Sigmoid colon (tissue), 7 donors: ENCODE measurements at regions of chr1 and their contacts with region 1.

Region 1: GRCh38 chr1:34865981-34866761 is 6.6 kb upstream of the SMIM12 start:
- DNase-seq: peak; percentile 91
- H3K4me3 ChIP-seq: peak overlapping the region; percentile 67 to 81 (median 78)
- H3K27ac ChIP-seq: peak overlapping the region; percentile 78 to 86 (median 83)
- H3K4me1 ChIP-seq: peaks cover 0 to 19% (median 12%) of the 10 kb centered on the region in 4 donors
- H3K27me3 ChIP-seq: no peaks in the 10 kb centered on the region
- CTCF ChIP-seq: peak; percentile 79 to 97 (median 94)
- EP300 ChIP-seq: no peak
- POLR2A ChIP-seq: no peak

Region 2: GRCh38 chr1:34786521-34787325 is 79.4 kb before region 1 on chr1:
- intact Hi-C with region 1: loop called (anchors 5 kb)
- DNase-seq: peak; percentile 68
- H3K4me3 ChIP-seq: no peak overlapping the region
- H3K27ac ChIP-seq: no peak overlapping the region
- H3K4me1 ChIP-seq: peaks cover 0 to 2% (median 2%) of the 10 kb centered on the region in 4 donors
- H3K27me3 ChIP-seq: peaks cover 16 to 26% (median 17%) of the 10 kb centered on the region in 3 donors
- CTCF ChIP-seq: peak in 3 of 4 experiments; percentile 54 to 78 (median 62)
- EP300 ChIP-seq: no peak
- POLR2A ChIP-seq: no peak

Region 3: GRCh38 chr1:34984793-34985608 is 118.8 kb after region 1 on chr1 and contains the start of gene TMEM35B:
- intact Hi-C with region 1: loop called (anchors 5 kb)
- DNase-seq: peak; percentile 80
- H3K4me3 ChIP-seq: peak within 1 kb of the TSS; percentile 65 to 90 (median 72)
- H3K27ac ChIP-seq: peak within 1 kb of the TSS; percentile 92 to 94 (median 92)
- H3K4me1 ChIP-seq: peaks cover 0 to 28% (median 19%) of the 10 kb centered on the region in 4 donors
- H3K27me3 ChIP-seq: no peaks in the 10 kb centered on the region
- CTCF ChIP-seq: no peak
- EP300 ChIP-seq: no peak
- POLR2A ChIP-seq: peak; percentile 44 to 49
- total RNA-seq, gene TMEM35B: 18.6 to 53.8 (median 29.0) TPM

Region 4: DNA sequence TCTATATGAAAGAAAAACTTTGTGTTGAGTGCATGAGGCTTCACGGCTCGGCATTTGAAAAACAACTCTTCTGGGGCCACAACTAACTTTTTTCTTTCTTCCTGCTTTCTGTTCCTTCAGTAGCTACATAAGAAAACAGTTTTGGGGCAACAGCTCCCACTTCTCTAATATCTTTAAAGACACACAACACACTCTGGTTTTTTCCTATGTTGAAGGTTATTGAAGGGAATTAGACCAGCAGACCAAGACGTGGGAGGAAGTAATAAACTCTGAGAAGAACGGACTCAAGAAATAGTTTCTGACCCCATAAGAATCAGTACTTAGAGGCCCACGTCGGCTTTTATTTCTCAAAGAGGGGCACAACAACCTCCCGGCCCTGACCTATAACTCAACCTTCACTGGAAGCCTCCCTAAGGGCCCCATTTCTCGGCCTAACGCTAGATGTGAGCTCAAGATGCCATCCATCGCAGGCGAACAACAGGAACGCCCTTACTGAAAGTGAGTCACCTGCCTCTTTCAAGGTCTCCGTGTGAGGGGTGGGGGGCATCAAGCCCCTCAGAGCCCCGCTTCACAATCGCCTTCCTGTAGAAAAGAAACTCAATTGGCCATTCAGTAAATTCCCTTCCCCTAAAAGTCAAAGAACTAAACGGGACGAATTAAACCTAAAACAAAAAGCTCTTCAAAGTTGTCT is 164.7 kb after region 1 on chr1:
- intact Hi-C with region 1: no loop called
- DNase-seq: no peak
- H3K4me3 ChIP-seq: peak overlapping the region; percentile 61 to 76 (median 70)
- H3K27ac ChIP-seq: peak overlapping the region; percentile 90 to 93 (median 92)
- H3K4me1 ChIP-seq: peaks cover 0 to 23% (median 18%) of the 10 kb centered on the region in 4 donors
- H3K27me3 ChIP-seq: no peaks in the 10 kb centered on the region
- CTCF ChIP-seq: no peak
- EP300 ChIP-seq: no peak
- POLR2A ChIP-seq: no peak

Region 5: DNA sequence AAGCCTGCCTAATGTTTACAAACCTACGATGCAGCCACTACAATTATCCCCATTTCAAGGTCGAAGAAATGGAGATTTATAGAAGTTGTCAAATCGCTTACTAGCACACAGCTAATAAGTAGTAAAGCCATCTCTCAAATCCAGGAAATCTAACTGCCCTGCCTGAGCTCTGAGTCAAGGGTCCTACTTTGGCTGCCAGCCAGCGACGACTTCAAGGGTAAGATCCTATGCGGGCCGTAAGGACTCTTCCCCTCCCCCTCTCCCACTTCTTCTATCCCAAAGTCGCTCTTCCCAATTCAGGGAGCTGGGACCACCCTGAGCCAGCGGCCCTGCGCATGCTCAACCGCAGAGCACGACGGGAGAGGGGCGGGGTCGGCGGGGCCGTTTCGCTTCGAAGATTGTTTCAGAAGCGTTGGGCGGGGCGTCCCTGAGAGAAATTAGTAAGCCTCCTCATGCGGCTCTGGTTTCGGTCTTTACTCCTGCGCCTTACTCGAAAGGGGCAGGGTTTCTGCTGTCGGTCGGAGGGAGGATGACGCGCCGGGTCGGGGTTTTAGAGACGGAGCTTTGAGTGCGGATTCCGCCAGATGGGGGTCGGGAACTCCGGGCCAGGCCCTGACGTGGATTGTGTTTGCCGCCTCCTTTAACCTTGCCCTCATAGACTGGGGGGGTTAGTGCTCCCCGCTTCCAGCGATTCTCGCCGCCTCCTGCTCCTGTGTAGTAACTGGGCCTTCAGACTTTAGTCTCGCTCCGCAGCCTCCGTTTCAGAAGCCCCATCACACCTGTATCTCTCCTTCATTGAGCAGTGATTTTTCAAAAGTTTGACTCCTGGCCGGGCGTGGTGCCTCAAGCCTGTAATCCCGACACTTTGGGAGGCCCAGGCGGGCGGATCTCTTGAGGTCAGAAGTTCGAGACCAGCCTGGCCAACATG is 213.1 kb after region 1 on chr1 and contains the start of gene ZMYM1:
- intact Hi-C with region 1: loop called (anchors 2 kb)
- DNase-seq: peak; percentile 91
- H3K4me3 ChIP-seq: peak within 1 kb of the TSS; percentile 60 to 71 (median 63)
- H3K27ac ChIP-seq: peak within 1 kb of the TSS; percentile 86 to 91 (median 88)
- H3K4me1 ChIP-seq: peaks cover 0 to 22% (median 14%) of the 10 kb centered on the region in 4 donors
- H3K27me3 ChIP-seq: no peaks in the 10 kb centered on the region
- CTCF ChIP-seq: no peak
- EP300 ChIP-seq: no peak
- POLR2A ChIP-seq: peak; percentile 39 to 42
- total RNA-seq, gene ZMYM1: 13.0 to 29.6 (median 19.3) TPM